GM12878 (cell line): ENCODE measurements at regions of chr2 and their contacts with region 1.

Region 1: GRCh38 chr2:44348400-44348799 is 12.9 kb downstream of the PREPL start:
- DNase-seq: no peak
- ATAC-seq: no peak
- H3K4me3 ChIP-seq: no peak overlapping the region
- H3K27ac ChIP-seq: no peak overlapping the region
- H3K4me1 ChIP-seq: no peaks in the 10 kb centered on the region
- H3K27me3 ChIP-seq: no peaks in the 10 kb centered on the region
- CTCF ChIP-seq: no peak
- EP300 ChIP-seq: no peak
- POLR2A ChIP-seq: no peak
- RAD21 ChIP-seq: no peak

Region 2: DNA sequence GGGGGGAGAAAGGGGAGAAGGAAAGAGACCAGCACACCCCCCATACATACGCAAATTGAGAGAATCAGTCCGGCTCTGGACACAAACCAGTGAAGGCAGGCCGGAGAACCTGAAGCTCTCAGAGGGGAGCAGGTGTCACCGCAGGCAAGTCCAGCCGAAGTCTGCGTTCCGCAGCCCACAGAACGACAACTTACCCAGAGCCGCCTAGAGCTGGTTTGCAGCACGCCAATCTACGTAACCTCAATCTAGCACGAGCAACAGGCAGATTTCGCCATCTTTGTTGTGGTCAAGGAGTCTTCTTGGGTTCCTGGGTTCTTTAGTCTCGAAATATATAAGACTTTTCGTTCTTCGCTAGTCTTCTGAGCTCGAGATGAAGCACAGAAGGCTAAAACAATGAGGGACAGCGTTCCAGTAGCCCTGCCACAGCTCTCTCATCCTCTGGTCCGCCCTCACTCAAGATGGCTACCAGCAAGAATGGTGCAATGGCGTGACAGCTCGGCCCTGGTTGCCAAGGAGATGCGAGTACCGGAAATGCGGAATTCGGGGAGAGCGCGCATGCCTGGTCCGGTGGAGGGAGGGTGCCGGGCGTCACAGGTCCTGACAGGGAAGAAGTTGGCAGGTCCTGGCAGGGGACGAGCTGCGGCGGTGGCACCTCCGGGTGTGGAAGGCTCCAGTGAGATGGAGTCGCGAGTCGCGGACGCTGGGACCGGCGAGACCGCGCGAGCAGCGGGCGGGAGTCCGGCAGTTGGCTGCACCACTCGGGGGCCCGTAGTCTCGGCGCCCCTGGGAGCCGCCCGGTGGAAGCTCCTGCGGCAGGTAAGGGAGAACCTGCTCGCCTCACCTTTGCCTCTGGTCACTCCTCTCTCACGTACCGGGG is 13.2 kb after region 1 on chr2 and contains the starts of genes CAMKMT and PREPL:
- CTCF ChIA-PET with region 1: interaction called, 9 read pairs
- POLR2A ChIA-PET with region 1: interaction called, 5 read pairs
- RAD21 ChIA-PET with region 1: interaction called, 6 read pairs
- SMC1A ChIA-PET with region 1: interaction called, 13 read pairs
- in situ Hi-C with region 1: no loop called
- intact Hi-C with region 1: no loop called
- DNase-seq: peak; percentile 90
- ATAC-seq: peak; percentile 86
- H3K4me3 ChIP-seq: peak within 1 kb of the TSS; percentile 83
- H3K27ac ChIP-seq: peak within 1 kb of the TSS; percentile 100
- H3K4me1 ChIP-seq: peaks cover 10% of the 10 kb centered on the region
- H3K27me3 ChIP-seq: no peaks in the 10 kb centered on the region
- CTCF ChIP-seq: no peak
- EP300 ChIP-seq: peak in 1 of 2 experiments; percentile 39; a peak in 1 of 4 replicates
- POLR2A ChIP-seq: peak; percentile 99
- RAD21 ChIP-seq: no peak
- polyA plus RNA-seq, gene CAMKMT: 2.7 to 3.7 TPM
- polyA plus RNA-seq, gene PREPL: 9.2 to 9.6 TPM